PC-9 (cell line): ENCODE measurements at regions of chr12 and their contacts with region 1.

Region 1: GRCh38 chr12:52278541-52279421 is 4.3 kb downstream of the KRT86 start:
- DNase-seq: peak; percentile 83 to 86
- H3K4me3 ChIP-seq: peak overlapping the region; percentile 78
- H3K27ac ChIP-seq: peak overlapping the region; percentile 100
- H3K4me1 ChIP-seq: peaks cover 60% of the 10 kb centered on the region
- H3K27me3 ChIP-seq: no peaks in the 10 kb centered on the region
- CTCF ChIP-seq: peak; percentile 95

Region 2: GRCh38 chr12:52121824-52122539 is 156.8 kb before region 1 on chr12:
- CTCF ChIA-PET with region 1: no interaction called
- POLR2A ChIA-PET with region 1: no interaction called
- intact Hi-C with region 1: no loop called
- DNase-seq: peak; percentile 36 to 56
- H3K4me3 ChIP-seq: no peak overlapping the region
- H3K27ac ChIP-seq: no peak overlapping the region
- H3K4me1 ChIP-seq: peaks cover 8% of the 10 kb centered on the region
- H3K27me3 ChIP-seq: no peaks in the 10 kb centered on the region
- CTCF ChIP-seq: peak; percentile 80

Region 3: DNA sequence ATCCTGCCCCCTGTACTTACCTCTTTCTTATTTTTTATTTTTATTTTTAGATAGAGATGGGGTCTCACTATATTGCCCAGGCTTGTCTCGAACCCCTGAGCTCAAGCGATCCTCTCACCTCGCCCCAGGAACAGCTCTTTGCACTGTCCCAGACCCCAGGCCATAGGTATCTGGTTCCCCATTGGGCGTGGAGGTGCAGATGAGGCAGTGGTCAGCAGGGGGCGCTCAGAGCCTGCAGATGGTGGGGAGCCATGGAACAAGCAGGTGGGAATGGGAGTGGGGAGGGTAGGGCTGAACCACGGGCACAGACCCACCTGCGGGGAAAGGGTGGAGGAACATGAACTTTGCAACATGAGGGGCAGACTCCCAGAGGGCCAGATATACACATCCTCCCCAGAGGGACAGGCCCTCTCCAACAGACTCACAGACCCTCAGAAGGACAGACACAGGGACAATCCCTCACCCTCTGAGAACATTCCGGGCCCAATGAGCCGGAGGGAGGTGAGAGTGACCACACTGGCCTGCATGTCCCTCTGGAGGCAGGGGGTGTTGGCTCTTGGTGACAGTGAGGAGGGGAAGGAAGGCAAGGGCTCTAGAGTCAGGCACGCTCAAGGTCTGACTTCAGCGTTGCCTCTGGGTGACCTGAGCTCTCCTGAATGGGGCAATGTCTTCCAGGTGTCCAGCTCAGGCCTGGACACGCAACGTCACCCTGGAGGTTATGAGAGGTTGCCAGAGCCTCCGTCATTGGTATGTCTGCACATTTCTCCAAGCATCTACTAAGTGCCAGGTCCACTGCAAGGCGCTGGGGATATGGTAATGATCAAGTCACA is 121.8 kb before region 1 on chr12:
- CTCF ChIA-PET with region 1: interaction called, 6 read pairs
- POLR2A ChIA-PET with region 1: interaction called, 28 read pairs
- intact Hi-C with region 1: no loop called
- DNase-seq: peak; percentile 54 to 82
- H3K4me3 ChIP-seq: no peak overlapping the region
- H3K27ac ChIP-seq: no peak overlapping the region
- H3K4me1 ChIP-seq: peaks cover 58% of the 10 kb centered on the region
- H3K27me3 ChIP-seq: no peaks in the 10 kb centered on the region
- CTCF ChIP-seq: peak; percentile 99

Region 4: GRCh38 chr12:52230327-52231291 is 48.2 kb before region 1 on chr12:
- CTCF ChIA-PET with region 1: interaction called, 3 read pairs
- POLR2A ChIA-PET with region 1: interaction called, 3 read pairs
- intact Hi-C with region 1: loop called (anchors 1 kb)
- DNase-seq: peak; percentile 85 to 97
- H3K4me3 ChIP-seq: peak overlapping the region; percentile 96
- H3K27ac ChIP-seq: peak overlapping the region; percentile 97
- H3K4me1 ChIP-seq: peaks cover 65% of the 10 kb centered on the region
- H3K27me3 ChIP-seq: no peaks in the 10 kb centered on the region
- CTCF ChIP-seq: no peak

Region 5: DNA sequence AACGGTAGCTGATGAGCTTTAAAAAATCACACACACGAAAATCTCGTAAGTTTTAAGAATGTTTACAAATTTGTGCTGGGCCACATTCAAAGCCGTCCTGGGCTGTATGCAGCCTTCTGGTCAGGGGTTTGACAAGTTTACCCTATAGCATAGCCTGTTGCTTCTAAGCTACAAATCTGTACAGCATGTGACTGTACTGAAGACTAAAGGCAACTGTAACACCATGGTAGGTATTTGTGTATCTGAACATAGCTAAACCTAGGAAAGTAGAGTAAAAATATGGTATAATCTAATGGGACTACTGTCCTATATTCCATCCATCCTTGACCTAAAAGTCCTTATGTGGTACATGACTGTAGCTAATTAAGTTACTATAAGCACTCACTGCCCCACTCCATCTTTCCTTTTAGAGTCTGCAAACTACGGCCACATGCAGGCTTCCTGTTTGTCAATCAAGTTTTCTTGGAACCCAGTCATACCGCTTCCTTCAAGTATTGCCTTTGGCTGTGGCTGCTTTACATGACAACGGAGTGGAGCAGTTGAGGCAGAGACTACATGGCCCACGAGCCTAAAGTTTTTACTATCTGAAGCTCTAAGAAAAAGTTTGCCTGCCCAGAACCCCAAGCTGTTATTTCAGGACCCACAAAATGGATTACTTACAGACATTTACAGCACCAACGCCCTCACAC is 27.3 kb before region 1 on chr12:
- CTCF ChIA-PET with region 1: interaction called, 7 read pairs
- POLR2A ChIA-PET with region 1: interaction called, 50 read pairs
- intact Hi-C with region 1: loop called (anchors 2 kb)
- DNase-seq: no peak
- H3K4me3 ChIP-seq: no peak overlapping the region
- H3K27ac ChIP-seq: peak overlapping the region; percentile 36
- H3K4me1 ChIP-seq: peaks cover 31% of the 10 kb centered on the region
- H3K27me3 ChIP-seq: no peaks in the 10 kb centered on the region
- CTCF ChIP-seq: no peak

Region 6: GRCh38 chr12:52327052-52327829 is 48.5 kb after region 1 on chr12:
- CTCF ChIA-PET with region 1: interaction called, 4 read pairs
- POLR2A ChIA-PET with region 1: interaction called, 8 read pairs
- intact Hi-C with region 1: loop called (anchors 1 kb)
- DNase-seq: peak; percentile 86 to 94
- H3K4me3 ChIP-seq: no peak overlapping the region
- H3K27ac ChIP-seq: no peak overlapping the region
- H3K4me1 ChIP-seq: peaks cover 12% of the 10 kb centered on the region
- H3K27me3 ChIP-seq: no peaks in the 10 kb centered on the region
- CTCF ChIP-seq: peak; percentile 85

Region 7: DNA sequence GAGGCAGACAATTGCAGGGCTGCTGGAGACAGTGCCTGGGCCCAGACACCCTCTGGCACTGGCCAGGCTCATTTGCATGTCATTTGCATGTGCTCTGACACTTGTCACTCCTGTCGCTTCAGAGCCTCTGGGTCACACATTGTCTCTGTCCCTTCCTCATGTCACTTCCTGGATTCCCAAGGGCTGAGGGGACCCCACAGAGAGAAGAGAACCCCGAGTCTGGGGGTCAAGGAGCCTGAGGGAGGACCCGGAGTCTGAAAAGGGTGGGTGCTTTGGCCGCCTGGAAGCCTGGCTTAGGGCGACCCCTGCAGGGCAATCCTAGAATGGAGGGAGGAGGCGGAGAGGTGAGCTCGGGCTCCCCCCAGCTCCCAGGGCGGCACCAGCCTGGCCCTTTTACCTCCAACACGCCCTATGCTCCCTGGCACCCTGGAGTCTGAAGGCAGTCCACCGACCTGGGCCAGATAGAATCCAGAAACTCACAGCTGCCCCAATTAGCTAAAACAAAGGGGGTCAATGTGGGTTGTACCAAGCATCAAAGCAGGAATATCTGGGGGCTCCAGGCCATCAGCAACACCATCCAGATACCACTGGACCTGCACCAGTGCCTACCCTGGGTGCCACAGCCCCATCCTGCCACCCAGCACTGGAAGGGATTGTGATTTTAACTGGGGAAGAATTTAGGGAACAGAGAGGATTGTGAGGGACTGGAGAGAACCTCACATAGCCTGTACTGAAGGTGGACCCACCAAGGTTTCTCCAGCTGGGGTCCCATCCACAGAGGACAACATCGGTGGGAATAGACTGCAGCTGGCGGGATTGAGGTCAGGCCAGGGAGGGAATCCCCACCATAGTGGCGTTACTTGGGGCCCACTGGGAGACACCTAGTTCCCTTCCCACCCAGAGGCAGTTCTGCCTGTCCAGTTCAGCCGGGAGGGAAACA is 591.8 kb after region 1 on chr12:
- CTCF ChIA-PET with region 1: interaction called, 7 read pairs
- POLR2A ChIA-PET with region 1: no interaction called
- intact Hi-C with region 1: loop called (anchors 1 kb)
- DNase-seq: peak; percentile 44 to 75
- H3K4me3 ChIP-seq: peak overlapping the region; percentile 23; the same call in 1 of the 2 replicates
- H3K27ac ChIP-seq: peak overlapping the region; percentile 100
- H3K4me1 ChIP-seq: peaks cover 51% of the 10 kb centered on the region
- H3K27me3 ChIP-seq: no peaks in the 10 kb centered on the region
- CTCF ChIP-seq: peak; percentile 94